Left cardiac atrium (tissue), 4 donors: ENCODE measurements at regions of chr3 and their contacts with region 1.

Region 1: DNA sequence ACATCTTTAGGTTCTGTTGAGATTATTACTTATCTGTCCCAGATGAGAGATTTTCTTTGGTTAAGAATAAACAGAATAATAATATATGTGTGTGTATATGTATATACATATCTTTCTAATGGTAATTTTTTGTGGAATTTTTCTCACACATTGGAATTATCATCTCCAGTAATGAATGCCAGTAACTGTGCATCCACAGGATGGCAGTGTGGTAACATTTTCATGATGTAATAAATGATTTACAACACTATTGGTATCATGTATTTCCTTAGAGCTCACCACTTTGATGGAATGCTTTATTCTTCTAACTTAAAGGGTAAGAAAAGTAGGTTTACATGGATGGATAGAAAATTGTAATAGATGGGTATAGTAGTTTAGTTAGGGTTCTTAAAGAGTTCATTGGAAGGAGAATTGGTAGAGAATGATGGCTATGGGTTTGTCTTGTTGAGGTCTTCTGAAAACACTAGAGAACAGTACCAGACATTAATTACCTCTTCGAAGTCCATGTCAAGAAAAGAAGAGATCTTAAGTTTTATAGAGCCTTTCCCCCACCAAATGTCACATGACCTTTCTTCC is 78.1 kb downstream of the STT3B start:
- DNase-seq: no peak
- ATAC-seq: peak in 1 of 2 donors; percentile 38

Region 2: DNA sequence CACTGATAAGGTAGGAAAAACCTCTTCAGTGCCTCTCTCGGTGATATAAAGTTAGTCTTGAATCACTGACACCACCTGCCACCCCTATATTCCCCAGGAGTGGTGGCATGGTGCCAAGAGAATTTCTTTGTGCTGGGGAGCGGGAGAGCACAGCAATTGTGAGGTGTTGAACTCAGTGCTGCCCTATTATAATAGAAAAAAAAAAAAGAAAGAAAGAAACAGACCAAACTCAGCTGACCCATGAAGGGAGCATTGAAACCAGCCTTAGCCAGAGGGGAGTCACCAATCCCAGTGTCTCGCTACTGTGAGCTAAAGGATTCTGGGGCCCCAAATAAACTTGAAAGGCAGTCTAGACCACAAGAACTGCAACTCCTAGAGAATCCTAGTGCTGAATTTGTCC is 279.5 kb before region 1 on chr3:
- intact Hi-C with region 1: no loop called
- DNase-seq: no peak
- ATAC-seq: no peak

Region 3: DNA sequence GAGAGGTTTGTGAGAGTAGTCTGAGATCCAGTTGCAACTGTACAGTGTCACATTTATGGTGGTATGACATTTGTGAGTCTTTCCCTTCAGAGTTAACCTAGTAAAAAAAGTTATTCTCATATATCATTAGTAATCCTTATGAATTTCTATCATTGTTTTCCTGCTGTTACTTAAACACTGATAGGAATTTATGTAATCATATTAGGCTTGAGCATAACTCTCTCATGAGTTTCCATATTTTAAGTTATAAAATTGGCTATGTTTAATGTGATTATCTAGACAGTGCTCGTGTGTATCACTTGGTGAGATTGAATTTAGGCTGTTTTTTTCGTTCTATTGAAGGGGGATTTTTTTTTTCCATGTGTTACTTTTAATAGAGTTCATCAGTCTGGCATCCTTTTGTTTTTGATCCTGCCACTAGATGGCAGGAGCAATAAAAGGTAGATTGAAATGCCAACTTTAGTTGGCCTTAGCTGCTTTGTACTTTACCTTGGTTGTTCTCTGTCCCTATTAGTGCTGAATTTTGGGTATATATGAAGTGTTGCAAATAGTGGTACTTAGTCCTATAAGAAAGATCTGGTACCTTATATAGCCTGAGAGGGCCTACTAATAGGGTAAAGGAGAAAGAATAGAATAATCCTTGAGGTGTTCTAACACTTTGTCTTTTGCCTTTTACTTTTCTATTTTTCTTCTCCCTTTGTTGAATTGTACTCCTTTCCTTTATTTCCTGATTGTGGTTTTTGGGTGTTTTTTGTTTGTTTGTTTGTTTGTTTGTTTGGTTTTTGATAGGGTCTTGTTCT is 60.1 kb before region 1 on chr3:
- intact Hi-C with region 1: loop called in 1 of 2 experiments (anchors 10 kb)
- DNase-seq: no peak
- ATAC-seq: peak; percentile 51 to 57